Activated B cell treated with CpG ODN at 0.5 μM for 24 hours (primary cell): ENCODE measurements at regions of chr7 and their contacts with region 1.

Region 1: DNA sequence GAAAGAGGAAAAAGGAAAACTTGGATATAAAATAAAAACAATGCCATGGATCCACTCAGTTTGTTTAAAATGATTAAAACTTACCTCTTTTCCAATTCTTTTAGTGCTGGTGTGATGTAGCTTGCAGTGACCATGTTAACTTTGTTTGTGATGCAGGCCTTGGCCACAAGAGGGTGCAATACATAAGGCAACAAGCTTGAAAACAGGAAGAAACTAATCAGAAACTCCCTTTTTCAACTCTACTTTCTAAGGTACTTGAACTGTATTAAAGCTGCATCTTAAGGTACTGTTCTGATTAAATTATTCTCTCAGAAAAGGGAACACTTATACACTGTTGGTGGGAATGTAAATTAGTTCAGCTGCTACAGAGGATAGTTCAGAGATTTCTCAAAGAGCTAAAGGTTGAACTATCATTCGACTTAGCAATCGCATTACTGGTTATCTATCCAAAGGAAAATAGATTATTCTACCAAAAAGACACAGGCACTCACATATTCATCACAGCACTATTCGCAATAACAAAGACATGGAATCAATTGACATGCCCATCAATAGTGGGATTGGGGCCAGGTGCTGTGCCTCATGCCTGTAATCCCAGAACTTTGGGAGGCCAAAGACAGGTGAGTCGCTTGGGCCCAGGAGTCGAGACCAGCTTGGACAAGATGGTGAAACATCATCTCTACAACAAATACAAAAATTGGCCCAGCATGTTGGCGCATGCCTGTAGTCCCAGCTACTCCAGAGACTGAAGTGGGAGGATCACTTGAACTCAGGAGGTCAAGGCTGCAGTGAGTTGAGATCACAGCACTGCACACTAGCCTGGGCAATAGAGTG is 50.9 kb downstream of the AASS start:
- DNase-seq: peak; percentile 35
- ATAC-seq: peak; percentile 82
- H3K4me3 Mint-ChIP-seq: no peak overlapping the region
- H3K27ac Mint-ChIP-seq: peak overlapping the region; percentile 18
- H3K4me1 Mint-ChIP-seq: peaks cover 4% of the 10 kb centered on the region
- H3K27me3 Mint-ChIP-seq: no peaks in the 10 kb centered on the region
- CTCF ChIP-seq: peak; percentile 26

Region 2: DNA sequence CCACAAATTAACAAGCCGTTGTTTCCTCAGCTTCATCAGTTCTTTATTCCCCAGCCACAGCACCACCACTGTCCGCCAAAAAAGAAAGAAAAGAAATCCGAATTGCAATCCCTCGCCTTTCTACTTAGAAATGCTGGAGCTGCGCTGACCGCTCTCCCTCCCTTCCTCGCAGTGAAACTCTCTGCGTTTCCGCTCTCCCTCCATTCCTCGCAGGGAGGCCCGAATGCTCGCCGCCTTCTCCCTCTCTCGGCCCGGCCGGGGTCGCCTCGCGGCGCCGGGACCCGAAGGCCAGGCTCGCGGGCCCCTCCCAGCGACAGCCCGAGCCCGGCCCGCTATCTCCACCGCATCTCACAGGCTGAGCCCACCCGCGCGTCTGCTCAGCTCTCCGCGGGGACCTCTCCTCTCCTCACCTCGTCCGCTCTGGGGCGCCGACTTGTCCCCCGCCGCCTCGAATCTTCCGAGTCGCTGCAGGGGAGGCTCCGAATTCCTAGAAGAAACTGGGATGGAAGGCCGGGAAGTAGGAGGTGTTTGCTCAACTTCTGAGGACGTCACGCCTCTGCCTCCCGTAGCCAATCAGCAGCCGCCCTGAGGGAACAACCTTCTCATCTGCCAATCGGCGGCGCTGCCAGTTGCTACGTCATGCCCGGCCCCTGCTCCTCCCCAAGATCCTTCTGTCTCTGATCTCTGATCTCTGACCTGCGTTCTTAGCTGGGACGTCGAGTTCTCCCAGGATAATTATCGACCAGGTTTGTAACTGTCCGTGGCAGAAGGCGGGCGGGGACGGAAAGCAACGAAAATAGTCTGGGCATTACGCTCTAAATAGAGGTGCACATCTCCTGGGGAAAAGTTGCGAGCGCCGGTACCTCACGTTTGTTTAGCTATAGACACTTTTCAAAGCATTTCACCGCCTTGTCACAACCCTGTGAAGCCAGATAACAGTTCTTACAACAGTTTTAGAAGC is 50.9 kb after region 1 on chr7 and contains the start of gene AASS:
- CTCF ChIA-PET with region 1: interaction called, 8 read pairs
- POLR2A ChIA-PET with region 1: no interaction called
- intact Hi-C with region 1: loop called (anchors 2 kb)
- DNase-seq: peak; percentile 78
- ATAC-seq: peak; percentile 98
- H3K4me3 Mint-ChIP-seq: peak within 1 kb of the TSS; percentile 96
- H3K27ac Mint-ChIP-seq: peak within 1 kb of the TSS; percentile 80
- H3K4me1 Mint-ChIP-seq: peaks cover 14% of the 10 kb centered on the region
- H3K27me3 Mint-ChIP-seq: peaks cover 8% of the 10 kb centered on the region
- CTCF ChIP-seq: no peak
- total RNA-seq, gene AASS: 5.9 and 6.3 TPM in 2 replicates

Region 3: GRCh38 chr7:122528879-122529481 is 435.8 kb after region 1 on chr7:
- CTCF ChIA-PET with region 1: interaction called, 22 read pairs
- POLR2A ChIA-PET with region 1: no interaction called
- intact Hi-C with region 1: no loop called
- DNase-seq: no peak
- ATAC-seq: no peak
- H3K4me3 Mint-ChIP-seq: no peak overlapping the region
- H3K27ac Mint-ChIP-seq: no peak overlapping the region
- H3K4me1 Mint-ChIP-seq: no peaks in the 10 kb centered on the region
- H3K27me3 Mint-ChIP-seq: peaks cover 4% of the 10 kb centered on the region
- CTCF ChIP-seq: peak; percentile 46

Region 4: DNA sequence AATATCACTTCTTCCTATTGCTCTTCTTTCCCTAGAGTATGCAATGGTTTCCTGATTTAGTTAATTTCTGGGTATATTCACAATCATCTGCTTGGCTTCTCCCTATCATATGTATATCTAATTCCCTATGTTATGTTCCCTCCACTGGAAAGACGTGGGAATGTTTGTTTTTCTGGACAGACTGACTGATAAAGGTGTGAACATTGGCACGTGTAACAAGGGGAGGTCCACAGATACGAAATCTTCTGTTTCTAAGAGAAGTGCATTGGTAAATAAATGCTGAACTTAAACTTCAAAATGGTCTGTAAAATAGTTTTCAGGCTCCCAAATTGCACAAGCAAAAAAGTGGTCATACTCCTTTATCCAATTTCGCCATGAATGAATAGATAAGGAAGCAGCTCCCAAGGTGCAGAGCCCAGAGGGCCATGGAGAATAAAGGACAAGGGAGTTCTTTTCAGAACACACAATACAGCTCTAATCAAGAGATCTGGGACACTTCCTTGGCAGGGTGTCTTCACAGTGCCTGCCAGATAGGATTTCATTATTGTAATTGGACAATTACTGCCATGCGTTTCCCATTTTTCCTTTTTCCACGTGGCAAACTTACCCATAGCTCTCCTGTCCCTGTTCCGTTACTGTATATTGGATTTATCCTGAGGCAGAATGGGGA is 463.8 kb after region 1 on chr7:
- CTCF ChIA-PET with region 1: no interaction called
- POLR2A ChIA-PET with region 1: no interaction called
- intact Hi-C with region 1: no loop called
- DNase-seq: no peak
- ATAC-seq: no peak
- H3K4me3 Mint-ChIP-seq: no peak overlapping the region
- H3K27ac Mint-ChIP-seq: no peak overlapping the region
- H3K4me1 Mint-ChIP-seq: no peaks in the 10 kb centered on the region
- H3K27me3 Mint-ChIP-seq: peaks cover 3% of the 10 kb centered on the region
- CTCF ChIP-seq: no peak

Region 5: GRCh38 chr7:123367484-123368122 is 1274.4 kb after region 1 on chr7:
- CTCF ChIA-PET with region 1: no interaction called
- POLR2A ChIA-PET with region 1: no interaction called
- intact Hi-C with region 1: loop called (anchors 5 kb)
- DNase-seq: no peak
- ATAC-seq: no peak
- H3K4me3 Mint-ChIP-seq: no peak overlapping the region
- H3K27ac Mint-ChIP-seq: no peak overlapping the region
- H3K4me1 Mint-ChIP-seq: no peaks in the 10 kb centered on the region
- H3K27me3 Mint-ChIP-seq: no peaks in the 10 kb centered on the region
- CTCF ChIP-seq: no peak